Motor neuron (in vitro differentiated cells): ENCODE measurements at regions of chr6 and their contacts with region 1.

Region 1: DNA sequence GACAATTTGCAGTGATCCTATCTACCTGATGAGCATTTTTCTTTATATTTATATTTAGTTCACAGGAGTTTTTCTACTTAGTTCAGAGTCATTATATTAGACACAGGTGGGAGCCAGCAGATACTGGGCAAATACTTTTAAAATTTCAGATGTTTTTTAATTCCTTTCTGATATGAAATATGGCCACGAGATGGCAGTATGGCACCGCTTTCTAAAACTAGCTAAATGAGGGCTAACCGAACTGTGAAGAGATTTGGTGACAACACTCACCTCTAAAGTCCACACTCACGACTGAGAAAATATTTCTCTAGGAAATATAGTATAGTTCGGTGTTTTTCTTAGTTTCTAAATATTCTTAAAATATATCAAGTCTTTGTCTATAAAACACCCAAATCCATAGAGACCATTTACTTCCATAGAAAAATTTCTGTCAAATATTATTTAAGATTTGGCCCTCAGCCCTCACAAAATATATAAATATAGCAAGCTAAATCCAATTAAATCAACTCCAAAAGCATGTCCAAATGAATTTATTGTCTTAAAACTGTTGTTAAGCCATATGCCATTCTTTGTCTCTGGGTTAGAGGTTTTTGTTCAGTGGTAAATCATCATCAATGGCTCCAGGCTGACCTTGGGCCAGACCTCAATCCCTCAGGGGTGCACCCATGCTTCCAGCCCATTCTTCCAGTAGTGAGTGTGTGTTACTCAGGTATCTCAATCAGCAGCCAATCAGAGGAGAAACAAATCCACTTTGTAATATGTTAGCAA is 63.6 kb downstream of the HUS1B start:
- ATAC-seq: peak in 4 of 8 experiments; percentile 31 to 63 (median 48)
- H3K4me3 ChIP-seq: no peak overlapping the region
- H3K27ac ChIP-seq: no peak overlapping the region
- H3K4me1 ChIP-seq: no peaks in the 10 kb centered on the region

Region 2: DNA sequence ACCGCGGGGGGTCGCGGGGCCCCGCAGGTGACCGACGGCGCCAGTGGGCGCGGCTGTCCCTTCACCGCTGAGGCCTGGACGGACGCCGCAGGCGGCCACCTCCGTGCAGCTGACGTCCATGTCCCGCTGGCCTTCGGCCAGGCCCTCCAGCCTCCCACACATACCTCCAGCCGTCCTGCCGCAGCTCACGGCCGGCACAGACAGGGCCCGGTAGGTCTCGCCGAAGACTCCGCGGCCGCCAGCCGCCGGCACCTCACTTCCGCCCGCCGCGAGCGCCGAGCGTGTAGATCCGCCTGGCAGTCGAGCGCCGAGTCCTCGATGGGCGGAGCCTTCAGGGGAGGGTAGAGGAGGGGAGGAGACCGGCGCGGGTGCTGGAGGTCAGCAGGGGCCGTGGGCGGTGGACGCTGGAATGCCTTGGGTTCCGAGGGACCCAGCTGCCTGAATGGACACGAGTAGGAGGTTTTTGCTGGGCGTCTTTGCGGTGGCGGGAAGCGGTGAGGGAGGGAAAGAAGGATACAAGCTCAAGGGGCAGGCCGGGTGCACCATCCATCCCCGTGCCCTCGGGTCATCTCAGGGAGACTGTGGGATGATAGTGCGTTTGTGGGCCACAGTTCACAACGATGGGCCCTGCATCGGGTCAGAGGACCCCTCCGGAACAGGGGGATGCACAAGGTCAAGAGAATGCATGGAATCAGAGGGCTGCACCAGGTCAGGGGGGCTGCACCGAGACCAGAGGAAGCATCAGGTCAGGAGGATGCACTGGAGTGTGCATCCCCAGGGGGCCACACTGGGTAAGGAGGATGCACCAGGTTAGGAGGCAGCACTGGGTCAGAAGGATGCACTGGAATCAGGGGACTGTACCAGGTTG is 99.8 kb after region 1 on chr6 and contains the start of gene EXOC2:
- in situ Hi-C with region 1: loop called in 1 of 9 experiments (anchors 10 kb)
- ATAC-seq: peak; percentile 83 to 97 (median 93)
- H3K4me3 ChIP-seq: peak within 1 kb of the TSS; percentile 72 to 97 (median 95)
- H3K27ac ChIP-seq: peak within 1 kb of the TSS; percentile 63 to 70
- H3K4me1 ChIP-seq: no peaks in the 10 kb centered on the region
- total RNA-seq, gene EXOC2: 18.0 to 40.8 (median 20.9) TPM

Region 3: DNA sequence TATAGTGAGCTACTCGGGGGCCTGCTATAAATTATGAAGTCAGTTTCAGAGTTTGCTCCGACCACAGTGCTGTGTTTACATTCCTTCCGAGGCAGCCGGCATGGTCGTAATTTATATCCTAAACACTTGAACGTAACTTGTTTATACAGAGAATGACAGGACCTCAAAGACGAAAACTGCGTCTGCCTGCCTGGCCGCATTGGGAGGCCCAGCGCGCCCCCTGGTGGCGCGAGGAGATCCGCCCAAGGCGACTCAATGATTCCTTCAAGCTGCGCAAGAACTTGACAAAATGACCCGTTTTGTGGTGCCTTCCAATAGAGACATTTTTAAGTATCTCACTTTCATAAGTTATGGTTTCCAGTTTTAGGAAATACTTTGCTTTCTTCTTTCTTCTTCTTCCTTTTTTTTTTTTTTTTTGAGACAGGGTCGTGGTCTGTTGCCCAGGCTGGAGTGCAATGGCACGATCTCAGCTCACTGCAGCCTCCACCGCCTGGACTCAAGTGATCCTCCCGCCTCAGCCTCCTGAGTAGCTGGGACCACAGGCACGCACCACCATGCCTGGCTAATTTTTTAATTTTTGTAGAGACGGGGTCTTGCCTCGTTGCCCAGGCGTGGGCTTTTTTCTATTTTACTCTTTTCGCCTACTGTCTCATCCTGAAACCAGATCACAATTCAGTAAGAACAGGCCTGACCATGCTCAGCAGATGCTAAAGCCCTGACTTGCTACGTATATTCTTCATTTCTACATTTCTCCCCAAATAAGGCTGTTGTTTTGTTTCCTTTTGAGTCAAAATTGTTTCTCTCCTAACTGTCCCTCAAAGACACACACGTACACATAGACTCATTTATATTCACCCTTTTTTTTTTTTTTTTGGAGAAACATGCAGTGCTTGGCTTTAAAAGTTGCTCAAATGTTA is 803.9 kb after region 1 on chr6:
- in situ Hi-C with region 1: loop called (anchors 25 kb)
- ATAC-seq: peak; percentile 44 to 89 (median 62)
- H3K4me3 ChIP-seq: no peak overlapping the region
- H3K27ac ChIP-seq: no peak overlapping the region
- H3K4me1 ChIP-seq: no peaks in the 10 kb centered on the region

Region 4: GRCh38 chr6:1424306-1424928 is 831.1 kb after region 1 on chr6:
- in situ Hi-C with region 1: loop called in 2 of 9 experiments (anchors 25 kb)
- ATAC-seq: peak in 6 of 8 experiments; percentile 20 to 95 (median 64)
- H3K4me3 ChIP-seq: no peak overlapping the region
- H3K27ac ChIP-seq: no peak overlapping the region
- H3K4me1 ChIP-seq: no peaks in the 10 kb centered on the region